Activated B cell treated with CpG ODN at 0.5 μM for 24 hours (primary cell): ENCODE measurements at regions of chr7 and their contacts with region 1.

Region 1: GRCh38 chr7:95772298-95772770 is at the start of gene DYNC1I1:
- DNase-seq: peak; percentile 21
- ATAC-seq: peak; percentile 61
- H3K4me3 Mint-ChIP-seq: peak within 1 kb of the TSS; percentile 68
- H3K27ac Mint-ChIP-seq: no peak within 1 kb of the TSS
- H3K4me1 Mint-ChIP-seq: peaks cover 3% of the 10 kb centered on the region
- H3K27me3 Mint-ChIP-seq: peaks cover 22% of the 10 kb centered on the region
- CTCF ChIP-seq: no peak
- total RNA-seq, gene DYNC1I1: not detected in 2 replicates

Region 2: DNA sequence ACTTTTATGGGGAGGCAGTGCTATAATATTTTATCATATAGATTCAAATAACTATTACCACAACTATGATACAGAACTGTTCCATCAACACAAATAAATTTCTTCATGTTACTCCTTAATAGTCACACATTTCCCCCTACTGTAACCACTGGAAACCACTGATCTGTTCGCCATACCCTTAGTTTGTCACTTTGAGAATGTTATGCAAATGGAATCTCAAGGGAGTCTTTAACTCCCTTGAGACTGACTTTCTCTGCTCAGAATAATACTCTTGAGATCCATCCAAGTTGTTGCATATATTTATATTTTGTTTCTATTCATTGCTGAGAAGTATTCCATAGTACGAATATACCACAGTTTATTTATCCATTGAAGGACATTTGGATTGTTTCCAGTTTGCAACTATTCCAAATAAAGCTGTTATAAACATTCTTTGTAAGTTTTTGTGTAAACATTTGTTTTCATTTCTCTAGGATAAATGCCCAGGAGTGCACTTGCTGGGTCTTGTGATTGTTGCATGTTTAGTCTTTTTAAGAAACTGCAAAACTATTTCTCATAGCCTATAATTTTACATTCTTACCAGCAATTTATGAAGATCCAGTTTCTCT is 317.8 kb before region 1 on chr7:
- CTCF ChIA-PET with region 1: no interaction called
- POLR2A ChIA-PET with region 1: interaction called, 15 read pairs
- intact Hi-C with region 1: no loop called
- DNase-seq: no peak
- ATAC-seq: peak; percentile 67
- H3K4me3 Mint-ChIP-seq: no peak overlapping the region
- H3K27ac Mint-ChIP-seq: no peak overlapping the region
- H3K4me1 Mint-ChIP-seq: peaks cover 10% of the 10 kb centered on the region
- H3K27me3 Mint-ChIP-seq: peaks cover 25% of the 10 kb centered on the region
- CTCF ChIP-seq: no peak

Region 3: DNA sequence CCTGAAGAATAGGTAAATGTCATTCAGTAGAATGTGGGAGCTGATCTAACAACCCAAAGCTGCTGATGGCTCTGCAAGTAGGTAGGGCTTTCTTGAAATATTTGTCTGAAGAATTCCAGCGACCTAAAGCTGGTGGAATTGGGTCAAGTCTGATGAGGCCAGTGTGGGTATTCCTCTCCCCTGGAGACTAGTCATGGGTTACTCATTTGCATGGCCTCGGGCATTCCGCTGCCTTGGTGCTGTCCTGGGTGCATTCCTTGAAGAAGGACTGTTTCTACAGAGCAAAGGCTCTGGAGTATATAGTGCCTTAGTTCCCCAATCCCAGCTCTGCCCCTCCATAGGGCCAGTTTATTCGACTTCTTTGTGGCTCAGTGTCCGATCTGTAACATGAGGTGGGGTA is 195.2 kb before region 1 on chr7:
- CTCF ChIA-PET with region 1: no interaction called
- POLR2A ChIA-PET with region 1: no interaction called
- intact Hi-C with region 1: no loop called
- DNase-seq: no peak
- ATAC-seq: no peak
- H3K4me3 Mint-ChIP-seq: no peak overlapping the region
- H3K27ac Mint-ChIP-seq: no peak overlapping the region
- H3K4me1 Mint-ChIP-seq: no peaks in the 10 kb centered on the region
- H3K27me3 Mint-ChIP-seq: peaks cover 12% of the 10 kb centered on the region
- CTCF ChIP-seq: no peak

Region 4: GRCh38 chr7:95899919-95900513 is 127.7 kb after region 1 on chr7:
- CTCF ChIA-PET with region 1: no interaction called
- POLR2A ChIA-PET with region 1: no interaction called
- intact Hi-C with region 1: no loop called
- DNase-seq: no peak
- ATAC-seq: no peak
- H3K4me3 Mint-ChIP-seq: no peak overlapping the region
- H3K27ac Mint-ChIP-seq: no peak overlapping the region
- H3K4me1 Mint-ChIP-seq: no peaks in the 10 kb centered on the region
- H3K27me3 Mint-ChIP-seq: no peaks in the 10 kb centered on the region
- CTCF ChIP-seq: no peak

Region 5: DNA sequence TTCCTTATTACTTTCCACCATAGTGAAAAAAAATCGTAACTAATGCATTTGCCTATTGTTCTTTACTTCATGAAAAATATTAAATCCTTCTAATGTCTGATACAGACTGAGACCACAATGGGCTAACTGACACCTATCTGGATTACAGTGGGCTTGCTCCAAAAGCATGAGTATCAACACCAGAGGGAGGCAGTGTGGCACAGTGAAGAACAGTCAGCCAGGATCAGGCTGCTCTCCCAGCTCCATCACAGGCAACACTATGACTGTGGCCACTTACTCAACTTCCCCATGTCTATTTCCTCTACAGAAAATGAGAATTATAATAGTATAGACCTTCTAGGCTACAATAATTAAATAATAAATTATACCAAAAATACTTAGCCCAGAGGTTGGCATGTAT is 452.4 kb after region 1 on chr7:
- CTCF ChIA-PET with region 1: no interaction called
- POLR2A ChIA-PET with region 1: no interaction called
- intact Hi-C with region 1: no loop called
- DNase-seq: no peak
- ATAC-seq: no peak
- H3K4me3 Mint-ChIP-seq: no peak overlapping the region
- H3K27ac Mint-ChIP-seq: no peak overlapping the region
- H3K4me1 Mint-ChIP-seq: no peaks in the 10 kb centered on the region
- H3K27me3 Mint-ChIP-seq: no peaks in the 10 kb centered on the region
- CTCF ChIP-seq: no peak